Heart left ventricle (tissue), 16 donors: ENCODE measurements at regions of chr6 and their contacts with region 1.

Region 1: DNA sequence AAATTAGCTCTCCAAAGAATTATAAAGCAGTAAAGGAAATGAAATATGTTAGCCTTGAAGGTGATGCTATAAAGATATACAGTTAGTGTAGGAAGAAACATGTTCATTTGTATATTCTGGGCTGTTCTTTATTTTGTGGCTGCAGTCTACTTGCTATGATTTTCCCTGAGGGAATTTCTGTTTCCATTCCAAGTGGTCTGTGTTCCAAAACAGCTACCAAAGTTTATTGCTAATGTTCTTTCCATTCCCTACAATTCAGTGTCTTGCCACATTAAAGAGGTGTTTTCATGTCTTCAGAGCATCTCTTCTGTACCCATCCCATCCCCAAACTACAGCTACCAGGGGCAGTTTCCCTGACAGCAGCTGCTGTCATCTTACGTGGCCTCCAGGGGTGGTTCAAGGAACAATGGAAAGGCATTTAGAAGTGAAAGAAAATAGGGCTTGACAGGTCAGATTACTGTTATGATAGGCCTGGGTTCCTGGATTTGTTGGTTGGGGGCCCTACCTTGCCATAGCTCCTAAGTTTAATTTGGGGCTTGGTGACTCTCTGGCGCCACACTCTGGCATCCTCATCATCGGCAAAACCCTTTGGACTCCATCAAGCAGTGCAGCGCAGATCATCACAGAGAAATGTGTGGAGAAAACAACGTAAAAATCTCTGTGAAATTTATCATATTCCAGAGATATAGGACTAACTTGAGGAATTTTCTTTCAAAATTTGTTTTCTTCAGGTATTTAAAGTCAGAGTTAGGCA is 33.8 kb upstream of the AIG1 start:
- DNase-seq: peak in 4 of 5 donors; percentile 23 to 38 (median 36)
- ATAC-seq: peak in 3 of 4 donors; percentile 65 to 78 (median 68)
- H3K4me3 ChIP-seq: no peak overlapping the region
- H3K27ac ChIP-seq: no peak overlapping the region
- H3K4me1 ChIP-seq: no peaks in the 10 kb centered on the region
- H3K27me3 ChIP-seq: no peaks in the 10 kb centered on the region
- CTCF ChIP-seq: peak; percentile 55 to 76 (median 66)
- POLR2A ChIP-seq: no peak

Region 2: DNA sequence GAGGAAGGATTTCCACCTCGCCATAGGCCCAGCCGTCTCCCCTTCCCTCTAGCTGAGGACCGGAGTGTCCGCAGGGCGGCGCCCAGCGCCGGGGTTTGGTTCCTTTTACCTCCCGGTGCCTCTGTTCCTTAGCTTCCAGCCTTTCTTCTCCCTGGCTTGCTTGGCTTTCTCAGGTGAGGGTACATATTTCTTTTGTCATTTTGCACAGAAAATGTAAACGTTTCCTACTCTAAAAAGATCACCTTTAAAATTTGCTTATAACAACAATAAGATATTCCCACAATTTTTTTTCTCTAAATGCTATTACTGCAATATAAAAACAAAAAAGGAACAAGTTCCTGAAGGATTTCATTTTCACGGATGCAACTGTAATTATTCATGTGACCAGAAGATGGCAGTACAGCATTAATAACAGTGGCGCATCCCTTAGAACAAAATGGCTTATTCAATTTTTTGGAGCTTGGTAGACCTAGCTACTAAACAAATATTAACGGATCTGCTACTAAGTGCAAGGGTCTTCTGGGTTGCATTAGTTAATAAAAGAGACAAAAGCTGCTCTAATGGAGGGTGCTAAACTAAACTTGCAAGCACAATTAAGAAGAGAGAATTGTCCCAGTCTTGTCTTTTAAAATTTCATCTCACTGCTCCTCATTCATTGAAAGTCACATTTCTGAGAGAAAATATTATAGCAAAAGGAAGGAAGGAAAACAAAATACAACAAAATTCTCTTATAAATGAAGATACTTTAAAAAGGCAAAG is 552.2 kb before region 1 on chr6:
- intact Hi-C with region 1: loop called in 3 of 10 experiments (anchors 5 to 10 kb)
- DNase-seq: peak in 1 of 5 donors; percentile 51
- ATAC-seq: no peak
- H3K4me3 ChIP-seq: no peak overlapping the region
- H3K27ac ChIP-seq: no peak overlapping the region
- H3K4me1 ChIP-seq: peaks cover 0 to 7% (median 0%) of the 10 kb centered on the region in 12 donors
- H3K27me3 ChIP-seq: peaks cover 0 to 2% (median 0%) of the 10 kb centered on the region in 9 donors
- CTCF ChIP-seq: peak; percentile 74 to 89 (median 80)
- POLR2A ChIP-seq: no peak

Region 3: GRCh38 chr6:142746524-142746923 is 280.3 kb before region 1 on chr6:
- intact Hi-C with region 1: loop called in 2 of 10 experiments (anchors 5 kb)
- DNase-seq: peak in 1 of 5 donors; percentile 25
- ATAC-seq: peak in 2 of 4 donors; percentile 53 to 56
- H3K4me3 ChIP-seq: no peak overlapping the region
- H3K27ac ChIP-seq: no peak overlapping the region
- H3K4me1 ChIP-seq: no peaks in the 10 kb centered on the region
- H3K27me3 ChIP-seq: no peaks in the 10 kb centered on the region
- CTCF ChIP-seq: peak; percentile 23 to 59 (median 45)
- POLR2A ChIP-seq: no peak

Region 4: DNA sequence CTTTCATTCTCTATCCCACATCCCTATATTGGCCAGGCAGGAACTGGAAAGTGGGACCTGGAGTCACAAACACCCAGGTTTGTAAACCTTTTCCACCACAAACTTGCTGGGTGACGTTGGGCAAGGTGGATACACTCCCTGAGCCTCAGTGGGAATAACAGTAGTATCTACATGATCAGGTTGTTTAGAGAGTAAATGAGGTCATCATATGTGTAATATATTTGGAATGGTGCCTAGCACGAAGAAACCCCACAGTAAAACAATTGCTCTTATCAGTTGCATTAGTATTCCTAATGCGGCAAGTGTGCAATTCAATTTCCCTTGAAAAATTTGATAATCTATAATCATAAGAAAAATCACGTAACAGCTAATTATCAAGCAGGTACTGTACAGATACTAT is 133.8 kb before region 1 on chr6:
- intact Hi-C with region 1: loop called in 1 of 10 experiments (anchors 10 kb)
- DNase-seq: no peak
- ATAC-seq: peak in 2 of 4 donors; percentile 14 to 32
- H3K4me3 ChIP-seq: peak overlapping the region in 2 of 12 donors; percentile 8 to 21
- H3K27ac ChIP-seq: no peak overlapping the region
- H3K4me1 ChIP-seq: peaks cover 0 to 20% (median 12%) of the 10 kb centered on the region in 12 donors
- H3K27me3 ChIP-seq: no peaks in the 10 kb centered on the region
- CTCF ChIP-seq: no peak
- POLR2A ChIP-seq: no peak

Region 5: DNA sequence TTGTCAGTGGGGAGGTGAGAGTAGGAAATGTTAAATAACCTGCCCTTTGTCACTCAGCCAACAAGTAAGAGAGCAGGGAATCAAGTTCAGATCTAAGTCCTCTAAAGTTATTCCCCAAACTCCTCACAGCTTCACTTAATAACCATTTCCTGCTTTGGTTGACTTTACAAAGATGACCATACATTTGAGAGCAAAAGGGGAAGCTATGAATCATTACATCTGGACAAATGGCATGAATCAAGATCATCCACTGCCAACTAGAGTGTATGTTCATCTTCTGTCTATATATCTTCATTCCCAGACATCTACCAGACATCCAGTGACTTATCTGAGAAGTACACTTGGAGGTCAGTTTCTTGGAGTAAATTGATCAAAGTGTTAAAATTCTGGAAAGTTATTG is 66.8 kb before region 1 on chr6:
- intact Hi-C with region 1: loop called in 1 of 10 experiments (anchors 2 kb)
- DNase-seq: no peak
- ATAC-seq: no peak
- H3K4me3 ChIP-seq: no peak overlapping the region
- H3K27ac ChIP-seq: no peak overlapping the region
- H3K4me1 ChIP-seq: peaks cover 0 to 4% (median 0%) of the 10 kb centered on the region in 12 donors
- H3K27me3 ChIP-seq: no peaks in the 10 kb centered on the region
- CTCF ChIP-seq: no peak
- POLR2A ChIP-seq: no peak